Heart left ventricle (tissue), 16 donors: ENCODE measurements at regions of chrX and their contacts with region 1.

Region 1: DNA sequence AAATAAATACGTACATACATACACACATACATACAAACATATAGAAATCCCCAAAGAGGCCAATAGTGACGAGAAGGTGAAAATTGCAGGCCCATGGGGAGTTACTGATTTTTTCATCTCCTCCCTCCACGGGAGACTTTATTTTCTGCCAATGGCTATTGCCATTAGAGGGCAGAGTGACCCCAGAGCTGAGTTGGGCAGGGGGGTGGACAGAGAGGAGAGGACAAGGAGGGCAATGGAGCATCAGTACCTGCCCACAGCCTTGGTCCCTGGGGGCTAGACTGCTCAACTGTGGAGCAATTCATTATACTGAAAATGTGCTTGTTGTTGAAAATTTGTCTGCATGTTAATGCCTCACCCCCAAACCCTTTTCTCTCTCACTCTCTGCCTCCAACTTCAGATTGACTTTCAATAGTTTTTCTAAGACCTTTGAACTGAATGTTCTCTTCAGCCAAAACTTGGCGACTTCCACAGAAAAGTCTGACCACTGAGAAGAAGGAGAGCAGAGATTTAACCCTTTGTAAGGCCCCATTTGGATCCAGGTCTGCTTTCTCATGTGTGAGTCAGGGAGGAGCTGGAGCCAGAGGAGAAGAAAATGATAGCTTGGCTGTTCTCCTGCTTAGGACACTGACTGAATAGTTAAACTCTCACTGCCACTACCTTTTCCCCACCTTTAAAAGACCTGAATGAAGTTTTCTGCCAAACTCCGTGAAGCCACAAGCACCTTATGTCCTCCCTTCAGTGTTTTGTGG is 180.7 kb downstream of the AR start:
- DNase-seq: no peak
- ATAC-seq: peak in 3 of 4 donors; percentile 44 to 65 (median 49)
- H3K4me3 ChIP-seq: no peak overlapping the region
- H3K27ac ChIP-seq: no peak overlapping the region
- H3K4me1 ChIP-seq: peaks cover 0 to 35% (median 10%) of the 10 kb centered on the region in 12 donors
- H3K27me3 ChIP-seq: no peaks in the 10 kb centered on the region
- CTCF ChIP-seq: peak in 9 of 12 donors; percentile 6 to 44 (median 30)
- POLR2A ChIP-seq: no peak

Region 2: GRCh38 chrX:67543818-67544217 is 180.7 kb before region 1 on chrX and contains the start of gene AR:
- intact Hi-C with region 1: loop called in 3 of 10 experiments (anchors 2 to 5 kb)
- DNase-seq: peak; percentile 66 to 81 (median 76)
- ATAC-seq: peak; percentile 52 to 82 (median 74)
- H3K4me3 ChIP-seq: peak within 1 kb of the TSS; percentile 3 to 63 (median 54)
- H3K27ac ChIP-seq: peak within 1 kb of the TSS in 10 of 12 donors; percentile 43 to 79 (median 66)
- H3K4me1 ChIP-seq: peaks cover 0 to 5% (median 0%) of the 10 kb centered on the region in 12 donors
- H3K27me3 ChIP-seq: peaks cover 0 to 57% (median 0%) of the 10 kb centered on the region in 9 donors
- CTCF ChIP-seq: no peak
- POLR2A ChIP-seq: peak in 1 of 2 donors; percentile 30
- total RNA-seq, gene AR: 9.5 to 30.1 (median 20.1) TPM

Region 3: GRCh38 chrX:67780694-67781109 is 56.2 kb after region 1 on chrX:
- intact Hi-C with region 1: loop called in 5 of 10 experiments (anchors 5 to 10 kb)
- DNase-seq: peak; percentile 79 to 91 (median 82)
- ATAC-seq: peak; percentile 86 to 93 (median 92)
- H3K4me3 ChIP-seq: peak overlapping the region in 1 of 12 donors; percentile 4
- H3K27ac ChIP-seq: peak overlapping the region; percentile 22 to 89 (median 78)
- H3K4me1 ChIP-seq: peaks cover 0 to 40% (median 19%) of the 10 kb centered on the region in 12 donors
- H3K27me3 ChIP-seq: no peaks in the 10 kb centered on the region
- CTCF ChIP-seq: no peak
- POLR2A ChIP-seq: no peak

Region 4: DNA sequence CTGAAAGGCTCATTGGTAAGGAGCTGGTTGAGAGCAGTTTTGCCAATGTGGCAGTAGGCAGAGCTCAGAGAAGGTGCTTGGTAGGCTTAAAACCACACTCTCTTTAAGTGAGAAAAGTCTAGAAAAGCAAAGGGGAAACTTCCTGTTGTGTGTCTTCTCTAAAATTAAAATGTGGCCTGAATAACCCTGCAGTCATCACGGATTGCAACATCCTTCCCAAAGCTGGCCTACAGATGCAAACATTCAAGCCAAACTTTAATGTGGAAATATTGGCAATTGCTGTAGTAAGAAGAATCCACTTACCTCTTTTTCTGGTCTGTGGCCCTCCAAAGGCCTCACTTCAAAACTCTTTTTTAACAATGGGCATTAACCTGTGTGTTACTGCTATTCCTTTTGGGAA is 360.2 kb after region 1 on chrX:
- intact Hi-C with region 1: loop called in 1 of 10 experiments (anchors 10 kb)
- DNase-seq: no peak
- ATAC-seq: peak in 3 of 4 donors; percentile 28 to 60 (median 53)
- H3K4me3 ChIP-seq: no peak overlapping the region
- H3K27ac ChIP-seq: peak overlapping the region in 5 of 12 donors; percentile 13 to 46 (median 20)
- H3K4me1 ChIP-seq: peaks cover 0 to 7% (median 0%) of the 10 kb centered on the region in 12 donors
- H3K27me3 ChIP-seq: peaks cover 0 to 12% (median 0%) of the 10 kb centered on the region in 9 donors
- CTCF ChIP-seq: no peak
- POLR2A ChIP-seq: no peak

Region 5: DNA sequence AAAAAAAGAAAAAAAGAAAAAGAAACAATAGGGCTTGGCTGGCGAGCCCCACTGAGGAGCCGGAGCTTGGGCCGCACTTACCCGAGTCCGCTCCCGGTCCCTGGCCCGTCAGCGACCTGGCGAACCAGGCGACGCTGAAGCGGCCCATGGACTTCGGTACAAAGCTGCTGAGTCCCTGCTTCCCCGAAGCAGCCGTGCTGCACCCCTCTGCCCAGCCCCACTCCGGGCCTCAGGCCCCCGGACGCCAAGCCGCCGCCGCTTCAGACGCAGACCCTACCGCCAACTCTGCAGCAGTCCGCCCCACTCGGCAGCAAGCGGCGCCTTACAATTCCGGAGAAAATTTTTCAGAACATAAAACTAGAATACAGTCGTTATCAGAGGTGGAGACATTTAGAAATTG is 408.2 kb after region 1 on chrX:
- intact Hi-C with region 1: loop called in 1 of 10 experiments (anchors 5 kb)
- DNase-seq: no peak
- ATAC-seq: no peak
- H3K4me3 ChIP-seq: no peak overlapping the region
- H3K27ac ChIP-seq: no peak overlapping the region
- H3K4me1 ChIP-seq: no peaks in the 10 kb centered on the region
- H3K27me3 ChIP-seq: no peaks in the 10 kb centered on the region
- CTCF ChIP-seq: no peak
- POLR2A ChIP-seq: no peak

Region 6: DNA sequence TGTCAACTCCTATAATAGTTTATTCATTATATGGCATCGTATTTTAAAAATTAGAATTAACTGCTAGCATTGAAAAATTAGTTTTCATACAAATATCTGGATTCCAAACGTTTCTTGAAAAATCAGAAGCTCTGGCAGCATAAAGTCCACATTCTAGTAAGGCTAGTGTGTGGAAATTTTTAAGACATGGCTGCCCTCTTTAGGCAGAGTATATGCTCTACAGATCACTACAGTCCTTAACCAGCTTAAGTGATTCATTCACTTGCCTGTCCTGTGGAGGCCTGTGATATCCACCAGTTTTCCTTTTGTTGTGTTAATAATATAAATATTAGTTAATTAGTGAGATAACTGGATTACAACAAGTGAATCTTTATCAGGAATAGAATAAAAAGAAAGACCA is 421.5 kb after region 1 on chrX:
- intact Hi-C with region 1: loop called in 2 of 10 experiments (anchors 5 kb)
- DNase-seq: no peak
- ATAC-seq: peak in 2 of 4 donors; percentile 68 to 78
- H3K4me3 ChIP-seq: no peak overlapping the region
- H3K27ac ChIP-seq: no peak overlapping the region
- H3K4me1 ChIP-seq: no peaks in the 10 kb centered on the region
- H3K27me3 ChIP-seq: no peaks in the 10 kb centered on the region
- CTCF ChIP-seq: peak in 11 of 12 donors; percentile 8 to 51 (median 33)
- POLR2A ChIP-seq: no peak